ENCODE measurements at regions of chr3 and their contacts with region 1.

Region 1: GRCh38 chr3:191269289-191270085 is 59.7 kb upstream of the CCDC50 start:
- DNase-seq: peak; percentile 49
- ATAC-seq: peak; percentile 87
- H3K4me3 ChIP-seq: no peak overlapping the region
- H3K27ac ChIP-seq: peak overlapping the region; percentile 46; the same call in 1 of the 2 replicates
- H3K4me1 ChIP-seq: peaks cover 11% of the 10 kb centered on the region
- H3K27me3 ChIP-seq: no peaks in the 10 kb centered on the region
- CTCF ChIP-seq: no peak
- EP300 ChIP-seq: no peak; a peak in 2 of 4 replicates
- POLR2A ChIP-seq: no peak
- RAD21 ChIP-seq: no peak

Region 2: DNA sequence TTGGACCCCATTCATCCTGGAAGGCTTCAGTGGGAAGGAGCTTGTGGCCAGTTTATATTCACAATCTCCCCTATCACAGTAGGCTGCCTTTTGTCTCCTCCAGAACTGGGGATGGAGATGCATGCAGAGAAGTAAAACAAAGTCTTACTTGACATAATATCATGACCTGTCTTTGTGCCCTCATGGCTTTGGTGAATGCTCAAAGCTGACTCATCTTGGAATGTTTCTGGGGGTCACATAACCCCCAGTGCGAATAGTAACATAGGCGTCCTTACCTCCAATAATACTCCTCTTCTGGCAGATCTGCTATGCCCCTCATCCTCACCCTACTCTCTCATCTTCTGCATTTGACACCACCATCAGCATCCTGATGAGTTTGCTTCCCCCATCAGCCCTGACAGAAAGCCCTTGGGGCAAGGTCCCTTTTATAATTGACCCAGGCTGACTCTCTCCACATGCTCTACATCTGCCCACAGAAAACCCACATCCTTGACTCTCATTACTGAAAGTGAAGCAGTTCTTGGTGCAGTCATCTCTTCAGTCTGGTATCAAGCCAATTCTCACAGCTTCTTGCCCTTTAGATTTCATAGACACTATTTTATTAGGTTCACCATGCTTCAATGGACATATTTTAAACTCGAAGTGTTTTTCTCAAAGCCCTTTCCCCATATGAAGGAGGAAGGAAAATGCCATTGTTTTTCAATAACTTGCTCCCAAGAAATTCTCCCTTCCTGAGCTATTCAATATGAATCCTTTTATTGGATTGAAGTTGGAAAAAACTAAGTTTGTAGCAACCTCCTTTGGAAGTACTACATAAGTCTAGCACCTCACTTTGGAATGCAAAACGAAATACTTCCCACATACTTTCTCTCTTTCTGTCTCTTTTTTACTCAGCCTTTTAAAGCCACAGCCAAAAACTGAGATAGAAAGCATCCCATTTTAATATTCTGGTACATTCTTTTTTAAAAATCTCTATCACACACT is 33.9 kb before region 1 on chr3:
- CTCF ChIA-PET with region 1: no interaction called
- POLR2A ChIA-PET with region 1: interaction called, 3 read pairs
- RAD21 ChIA-PET with region 1: interaction called, 6 read pairs
- SMC1A ChIA-PET with region 1: interaction called, 14 read pairs
- in situ Hi-C with region 1: no loop called
- intact Hi-C with region 1: no loop called
- DNase-seq: peak; percentile 90
- ATAC-seq: peak; percentile 98
- H3K4me3 ChIP-seq: no peak overlapping the region
- H3K27ac ChIP-seq: peak overlapping the region; percentile 17; the same call in 1 of the 2 replicates
- H3K4me1 ChIP-seq: peaks cover 19% of the 10 kb centered on the region; the same call in 1 of the 2 replicates
- H3K27me3 ChIP-seq: no peaks in the 10 kb centered on the region
- CTCF ChIP-seq: no peak
- EP300 ChIP-seq: peak; percentile 64 to 68; a peak in 2 of 4 replicates
- POLR2A ChIP-seq: no peak
- RAD21 ChIP-seq: peak; percentile 30; the same call in 1 of the 2 replicates

Region 3: DNA sequence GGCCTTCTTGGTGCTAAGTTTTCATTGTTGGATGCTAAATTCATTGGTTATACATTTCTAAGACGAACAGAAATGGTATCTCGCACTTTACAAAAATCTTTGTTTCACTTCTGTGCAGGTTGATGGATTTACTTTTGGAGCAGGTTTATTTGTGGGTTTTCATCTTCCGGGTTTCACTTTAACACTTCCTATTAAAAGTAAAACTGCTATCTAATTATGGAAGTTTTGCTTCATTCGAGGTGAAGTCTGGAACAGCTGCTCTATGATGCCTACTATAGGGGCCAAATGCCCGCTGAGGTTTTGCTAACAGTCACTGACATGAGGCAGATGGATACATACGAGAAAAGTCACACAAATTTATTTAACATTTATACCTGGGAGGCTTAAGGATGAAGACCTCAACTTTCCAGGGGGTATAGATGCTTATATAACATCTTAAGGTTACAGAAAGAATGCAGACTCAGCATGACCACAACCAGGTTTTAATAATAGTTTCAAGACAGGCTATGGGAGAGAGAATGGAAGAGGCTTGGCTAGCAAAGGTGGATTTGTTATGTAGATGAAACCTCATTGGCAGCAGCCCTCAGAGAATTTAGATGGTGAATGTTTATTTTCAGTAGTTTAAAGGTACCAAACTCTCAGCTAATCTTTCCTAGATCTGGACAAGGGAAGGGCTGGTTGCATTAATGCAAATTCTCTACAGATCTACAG is 16.2 kb before region 1 on chr3:
- CTCF ChIA-PET with region 1: interaction called, 5 read pairs
- POLR2A ChIA-PET with region 1: interaction called, 3 read pairs
- RAD21 ChIA-PET with region 1: interaction called, 36 read pairs
- SMC1A ChIA-PET with region 1: interaction called, 45 read pairs
- in situ Hi-C with region 1: no loop called
- intact Hi-C with region 1: loop called (anchors 2 kb)
- DNase-seq: peak; percentile 35
- ATAC-seq: peak; percentile 70
- H3K4me3 ChIP-seq: peak overlapping the region; percentile 28; the same call in 1 of the 2 replicates
- H3K27ac ChIP-seq: peak overlapping the region; percentile 42; the same call in 1 of the 2 replicates
- H3K4me1 ChIP-seq: peaks cover 25% of the 10 kb centered on the region
- H3K27me3 ChIP-seq: no peaks in the 10 kb centered on the region
- CTCF ChIP-seq: no peak
- EP300 ChIP-seq: no peak
- POLR2A ChIP-seq: no peak
- RAD21 ChIP-seq: no peak

Region 4: DNA sequence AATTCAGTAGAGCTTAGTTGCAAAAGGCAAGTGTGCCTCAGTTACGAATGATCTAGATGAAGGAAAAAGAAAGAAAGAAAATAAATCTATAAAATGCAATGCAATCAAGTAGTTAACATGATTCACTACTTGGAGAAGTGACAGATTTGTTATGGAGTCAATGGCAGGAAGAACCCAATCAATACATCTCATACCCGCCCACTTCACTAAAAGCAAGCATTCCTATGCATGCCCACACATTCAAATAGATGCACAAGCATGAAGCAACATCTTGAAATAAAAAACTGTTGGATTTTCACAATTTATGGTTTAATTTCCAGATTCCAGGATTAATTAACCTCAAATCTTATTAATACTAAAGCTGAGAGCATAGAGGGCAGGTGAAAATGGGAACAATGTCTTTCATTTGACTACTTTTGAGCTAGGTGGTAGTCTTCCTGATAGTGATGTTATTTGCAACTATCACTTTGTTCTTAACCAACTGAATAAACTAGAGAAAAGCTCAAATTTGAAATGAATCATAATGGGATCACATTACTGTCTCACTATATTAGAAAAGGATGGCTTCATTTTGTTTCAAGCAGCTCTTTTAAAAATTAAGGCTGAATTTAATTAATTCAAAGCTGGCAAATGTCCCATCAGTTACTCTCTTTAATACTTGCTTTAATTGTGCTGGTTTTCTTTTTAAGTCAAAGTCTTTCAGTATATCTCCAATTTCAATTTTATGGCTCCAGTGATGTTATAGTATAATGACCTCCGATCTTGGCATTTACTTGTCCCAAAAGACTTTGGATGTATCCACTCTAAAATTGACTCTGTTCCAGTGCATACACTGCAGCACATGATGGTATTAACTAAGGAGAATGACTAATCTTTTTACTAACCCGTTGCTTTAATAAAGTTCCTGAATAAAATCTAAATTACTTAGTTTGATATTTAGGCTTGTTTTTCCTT is 13.1 kb after region 1 on chr3:
- CTCF ChIA-PET with region 1: interaction called, 29 read pairs
- POLR2A ChIA-PET with region 1: interaction called, 21 read pairs
- RAD21 ChIA-PET with region 1: interaction called, 8 read pairs
- SMC1A ChIA-PET with region 1: interaction called, 375 read pairs
- in situ Hi-C with region 1: no loop called
- intact Hi-C with region 1: no loop called
- DNase-seq: no peak
- ATAC-seq: peak; percentile 43
- H3K4me3 ChIP-seq: no peak overlapping the region
- H3K27ac ChIP-seq: no peak overlapping the region
- H3K4me1 ChIP-seq: peaks cover 4% of the 10 kb centered on the region; the same call in 1 of the 2 replicates
- H3K27me3 ChIP-seq: no peaks in the 10 kb centered on the region
- CTCF ChIP-seq: no peak
- EP300 ChIP-seq: no peak
- POLR2A ChIP-seq: no peak
- RAD21 ChIP-seq: no peak

Region 5: DNA sequence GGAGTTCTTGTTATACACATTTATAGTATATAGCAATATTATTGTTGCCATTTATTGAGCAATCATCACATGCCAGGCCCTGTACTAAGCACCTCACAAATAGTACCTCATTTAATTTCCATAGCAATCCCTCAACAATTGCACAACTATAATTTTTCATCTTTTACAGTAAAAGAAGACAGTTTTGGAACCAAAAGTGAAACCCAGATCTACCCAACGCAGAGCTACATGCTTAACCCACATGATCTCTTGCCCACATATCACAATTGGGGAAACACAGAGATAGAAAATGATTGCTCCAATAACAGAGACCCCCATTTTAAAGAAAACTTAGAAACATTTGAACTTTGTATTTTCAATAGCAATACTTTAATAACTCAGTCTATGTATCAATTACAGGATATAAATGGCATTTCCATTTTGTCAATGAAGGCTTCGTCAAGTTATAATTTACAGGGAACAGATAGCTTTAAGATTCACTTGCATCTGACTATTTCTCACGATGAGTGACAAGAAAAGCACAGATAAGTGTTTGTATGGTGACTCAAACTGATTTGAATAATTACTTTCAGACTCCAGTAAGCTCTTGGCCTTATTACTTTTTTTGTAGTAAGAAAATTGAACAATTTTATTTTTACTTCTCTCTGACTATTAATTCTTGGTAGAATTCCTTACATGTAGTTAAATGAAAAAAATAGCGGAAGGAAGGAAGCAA is 21.0 kb after region 1 on chr3:
- CTCF ChIA-PET with region 1: interaction called, 26 read pairs
- POLR2A ChIA-PET with region 1: interaction called, 17 read pairs
- RAD21 ChIA-PET with region 1: interaction called, 55 read pairs
- SMC1A ChIA-PET with region 1: interaction called, 375 read pairs
- in situ Hi-C with region 1: no loop called
- intact Hi-C with region 1: no loop called
- DNase-seq: no peak
- ATAC-seq: peak; percentile 93
- H3K4me3 ChIP-seq: no peak overlapping the region
- H3K27ac ChIP-seq: peak overlapping the region; percentile 68
- H3K4me1 ChIP-seq: peaks cover 13% of the 10 kb centered on the region
- H3K27me3 ChIP-seq: no peaks in the 10 kb centered on the region
- CTCF ChIP-seq: no peak
- EP300 ChIP-seq: no peak
- POLR2A ChIP-seq: no peak
- RAD21 ChIP-seq: no peak

Region 6: GRCh38 chr3:191296041-191296541 is 26.6 kb after region 1 on chr3:
- CTCF ChIA-PET with region 1: interaction called, 26 read pairs
- POLR2A ChIA-PET with region 1: interaction called, 17 read pairs
- RAD21 ChIA-PET with region 1: interaction called, 55 read pairs
- SMC1A ChIA-PET with region 1: interaction called, 375 read pairs
- in situ Hi-C with region 1: no loop called
- intact Hi-C with region 1: no loop called
- DNase-seq: peak; percentile 88
- ATAC-seq: peak; percentile 80
- H3K4me3 ChIP-seq: no peak overlapping the region
- H3K27ac ChIP-seq: peak overlapping the region; percentile 5; the same call in 1 of the 2 replicates
- H3K4me1 ChIP-seq: peaks cover 46% of the 10 kb centered on the region
- H3K27me3 ChIP-seq: no peaks in the 10 kb centered on the region
- CTCF ChIP-seq: no peak
- EP300 ChIP-seq: peak; percentile 88 to 98
- POLR2A ChIP-seq: no peak
- RAD21 ChIP-seq: no peak

Region 7: GRCh38 chr3:191336833-191337232 is 67.3 kb after region 1 on chr3:
- CTCF ChIA-PET with region 1: interaction called, 3 read pairs
- POLR2A ChIA-PET with region 1: interaction called, 3 read pairs
- RAD21 ChIA-PET with region 1: interaction called, 19 read pairs
- SMC1A ChIA-PET with region 1: interaction called, 39 read pairs
- in situ Hi-C with region 1: no loop called
- intact Hi-C with region 1: no loop called
- DNase-seq: no peak
- ATAC-seq: peak; percentile 37
- H3K4me3 ChIP-seq: peak overlapping the region; percentile 54
- H3K27ac ChIP-seq: peak overlapping the region; percentile 15; the same call in 1 of the 2 replicates
- H3K4me1 ChIP-seq: peaks cover 12% of the 10 kb centered on the region; the same call in 1 of the 2 replicates
- H3K27me3 ChIP-seq: no peaks in the 10 kb centered on the region
- CTCF ChIP-seq: no peak
- EP300 ChIP-seq: no peak
- POLR2A ChIP-seq: no peak
- RAD21 ChIP-seq: no peak

Region 8: GRCh38 chr3:191682961-191683360 is 413.5 kb after region 1 on chr3:
- CTCF ChIA-PET with region 1: no interaction called
- POLR2A ChIA-PET with region 1: no interaction called
- RAD21 ChIA-PET with region 1: no interaction called
- SMC1A ChIA-PET with region 1: no interaction called
- in situ Hi-C with region 1: no loop called
- intact Hi-C with region 1: no loop called
- DNase-seq: no peak
- ATAC-seq: no peak
- H3K4me3 ChIP-seq: no peak overlapping the region
- H3K27ac ChIP-seq: no peak overlapping the region
- H3K4me1 ChIP-seq: no peaks in the 10 kb centered on the region
- H3K27me3 ChIP-seq: no peaks in the 10 kb centered on the region; a peak in 1 of 4 replicates
- CTCF ChIP-seq: no peak
- EP300 ChIP-seq: no peak
- POLR2A ChIP-seq: no peak
- RAD21 ChIP-seq: no peak

Measured in GM12878 (cell line).